Mammary epithelial cell (primary cell): ENCODE measurements at regions of chr15 and their contacts with region 1.

Region 1: DNA sequence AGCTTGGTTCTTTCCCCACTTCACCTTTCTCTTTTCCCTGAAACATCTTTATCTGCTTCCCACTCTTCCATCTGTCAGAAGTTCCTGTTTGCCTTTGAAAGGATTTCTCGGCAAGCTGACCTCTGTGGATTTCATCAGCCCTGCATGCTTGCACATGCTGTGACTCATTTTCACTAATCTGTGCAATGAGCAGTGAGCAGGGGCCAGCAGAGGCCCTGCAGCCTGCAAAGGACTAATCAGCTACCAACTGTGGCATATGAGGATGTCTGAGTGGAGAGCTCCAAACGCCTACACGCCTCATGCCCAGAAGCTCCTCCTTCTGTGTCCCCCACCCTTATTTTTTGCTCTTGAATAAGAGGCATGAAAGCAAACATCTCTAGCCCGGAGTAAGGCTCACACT is 333.0 kb upstream of the SEMA6D start:
- DNase-seq: peak; percentile 87
- H3K4me3 ChIP-seq: no peak overlapping the region
- H3K27ac ChIP-seq: peak overlapping the region; percentile 57
- H3K4me1 ChIP-seq: peaks cover 21% of the 10 kb centered on the region
- H3K27me3 ChIP-seq: no peaks in the 10 kb centered on the region
- CTCF ChIP-seq: no peak

Region 2: GRCh38 chr15:47443839-47444238 is 59.5 kb after region 1 on chr15:
- CTCF ChIA-PET with region 1: no interaction called
- dilution Hi-C with region 1: no loop called
- in situ Hi-C with region 1: no loop called
- intact Hi-C with region 1: loop called (anchors 2 kb)
- DNase-seq: peak; percentile 86
- H3K4me3 ChIP-seq: no peak overlapping the region
- H3K27ac ChIP-seq: peak overlapping the region; percentile 87
- H3K4me1 ChIP-seq: peaks cover 26% of the 10 kb centered on the region
- H3K27me3 ChIP-seq: no peaks in the 10 kb centered on the region
- CTCF ChIP-seq: no peak

Region 3: GRCh38 chr15:47473832-47474231 is 89.5 kb after region 1 on chr15:
- CTCF ChIA-PET with region 1: interaction called, 6 read pairs
- dilution Hi-C with region 1: no loop called
- in situ Hi-C with region 1: no loop called
- intact Hi-C with region 1: loop called (anchors 5 kb)
- DNase-seq: no peak
- H3K4me3 ChIP-seq: no peak overlapping the region
- H3K27ac ChIP-seq: no peak overlapping the region
- H3K4me1 ChIP-seq: no peaks in the 10 kb centered on the region
- H3K27me3 ChIP-seq: no peaks in the 10 kb centered on the region
- CTCF ChIP-seq: no peak

Region 4: DNA sequence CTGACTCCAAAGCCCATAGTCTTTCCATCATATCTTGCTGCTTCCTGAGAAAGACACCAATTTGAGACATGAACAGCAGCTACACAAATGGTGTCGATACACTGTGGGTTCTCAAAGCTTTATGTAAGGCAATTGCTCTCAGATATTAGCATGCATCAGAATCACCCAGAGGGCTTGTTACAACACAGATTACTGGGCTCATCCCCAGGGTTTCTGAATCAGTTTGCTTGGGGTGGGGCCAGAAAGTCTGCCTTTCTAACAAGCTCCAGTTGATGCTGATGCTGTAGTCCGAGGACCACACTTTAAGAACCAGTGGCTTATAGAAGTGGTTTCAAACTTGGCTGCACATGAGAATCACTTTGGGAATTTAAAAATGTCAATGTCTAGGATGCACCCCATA is 419.4 kb after region 1 on chr15:
- CTCF ChIA-PET with region 1: no interaction called
- dilution Hi-C with region 1: no loop called
- in situ Hi-C with region 1: no loop called
- intact Hi-C with region 1: loop called (anchors 10 kb)
- DNase-seq: peak; percentile 65
- H3K4me3 ChIP-seq: no peak overlapping the region
- H3K27ac ChIP-seq: no peak overlapping the region
- H3K4me1 ChIP-seq: peaks cover 16% of the 10 kb centered on the region
- H3K27me3 ChIP-seq: no peaks in the 10 kb centered on the region
- CTCF ChIP-seq: no peak